Gastrocnemius medialis (tissue), 4 donors: ENCODE measurements at regions of chr10 and their contacts with region 1.

Region 1: GRCh38 chr10:6151087-6151977 is 51.4 kb upstream of the PFKFB3 start:
- DNase-seq: peak in 1 of 2 donors; percentile 63
- ATAC-seq: peak; percentile 43 to 82
- H3K4me3 ChIP-seq: peak overlapping the region in 1 of 4 donors; percentile 15
- H3K27ac ChIP-seq: peak overlapping the region; percentile 24 to 58 (median 54)
- H3K4me1 ChIP-seq: peaks cover 27 to 39% of the 10 kb centered on the region in 2 donors
- H3K27me3 ChIP-seq: no peaks in the 10 kb centered on the region
- CTCF ChIP-seq: peak; percentile 31 to 66 (median 51)
- POLR2A ChIP-seq: no peak

Region 2: DNA sequence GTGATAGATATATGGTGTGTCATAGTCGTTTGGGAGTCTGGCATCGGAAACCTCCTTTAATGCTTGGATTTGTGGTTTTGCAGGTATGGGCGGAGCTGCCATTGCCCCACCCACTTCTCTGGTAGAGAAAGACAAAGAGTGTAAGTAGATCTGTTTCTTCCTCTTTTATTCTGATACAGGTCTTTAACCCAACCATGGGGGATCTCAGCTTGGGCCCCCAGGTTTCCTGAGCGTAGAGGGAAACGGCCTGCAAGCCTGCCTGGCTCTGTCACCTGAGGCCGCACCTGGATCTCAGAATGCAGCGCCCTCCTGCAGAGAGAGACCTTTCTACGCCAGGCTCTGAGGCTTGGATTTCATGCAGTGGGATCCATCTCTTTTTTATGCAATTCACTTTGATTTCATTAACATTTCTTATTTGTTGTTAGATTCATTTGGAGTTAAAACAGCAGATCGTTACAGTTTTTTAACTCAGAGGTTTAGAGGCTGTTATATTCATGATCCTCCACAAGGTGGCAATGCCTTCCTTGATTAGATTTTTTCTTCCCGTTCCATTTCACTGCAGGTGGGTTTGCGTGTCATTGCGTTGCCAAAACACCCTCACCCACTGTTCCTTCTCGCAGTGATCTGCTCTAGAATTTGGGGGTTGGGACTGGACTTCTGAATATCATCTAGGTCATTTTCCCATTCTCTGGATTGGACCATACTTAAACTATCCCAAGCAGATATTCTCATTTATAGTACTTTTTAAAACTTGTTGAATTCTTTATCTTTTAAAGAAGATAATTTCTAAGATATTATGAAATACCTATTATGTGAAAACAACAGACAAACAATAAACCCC is 42.5 kb before region 1 on chr10:
- in situ Hi-C with region 1: loop called in 2 of 4 experiments (anchors 5 kb)
- intact Hi-C with region 1: loop called (anchors 1 kb)
- DNase-seq: no peak
- ATAC-seq: peak in 1 of 2 donors; percentile 23
- H3K4me3 ChIP-seq: no peak overlapping the region
- H3K27ac ChIP-seq: peak overlapping the region; percentile 12 to 41 (median 35)
- H3K4me1 ChIP-seq: peaks cover 8 to 19% of the 10 kb centered on the region in 2 donors
- H3K27me3 ChIP-seq: no peaks in the 10 kb centered on the region
- CTCF ChIP-seq: peak; percentile 75 to 82 (median 77)
- POLR2A ChIP-seq: no peak

Region 3: GRCh38 chr10:6114805-6115341 is 36.5 kb before region 1 on chr10:
- in situ Hi-C with region 1: loop called in 2 of 4 experiments (anchors 5 kb)
- intact Hi-C with region 1: no loop called
- DNase-seq: peak in 1 of 2 donors; percentile 49
- ATAC-seq: peak; percentile 15 to 24
- H3K4me3 ChIP-seq: no peak overlapping the region
- H3K27ac ChIP-seq: peak overlapping the region; percentile 78 to 83 (median 80)
- H3K4me1 ChIP-seq: peaks cover 48 to 49% of the 10 kb centered on the region in 2 donors
- H3K27me3 ChIP-seq: no peaks in the 10 kb centered on the region
- CTCF ChIP-seq: no peak
- POLR2A ChIP-seq: no peak